Brain microvascular endothelial cell (primary cell): ENCODE measurements at regions of chr4 and their contacts with region 1.

Region 1: GRCh38 chr4:110005461-110006056 is 92.9 kb downstream of the EGF start:
- DNase-seq: peak; percentile 53
- H3K4me3 ChIP-seq: no peak overlapping the region
- H3K27ac ChIP-seq: no peak overlapping the region
- H3K27me3 ChIP-seq: no peaks in the 10 kb centered on the region
- CTCF ChIP-seq: peak; percentile 57

Region 2: DNA sequence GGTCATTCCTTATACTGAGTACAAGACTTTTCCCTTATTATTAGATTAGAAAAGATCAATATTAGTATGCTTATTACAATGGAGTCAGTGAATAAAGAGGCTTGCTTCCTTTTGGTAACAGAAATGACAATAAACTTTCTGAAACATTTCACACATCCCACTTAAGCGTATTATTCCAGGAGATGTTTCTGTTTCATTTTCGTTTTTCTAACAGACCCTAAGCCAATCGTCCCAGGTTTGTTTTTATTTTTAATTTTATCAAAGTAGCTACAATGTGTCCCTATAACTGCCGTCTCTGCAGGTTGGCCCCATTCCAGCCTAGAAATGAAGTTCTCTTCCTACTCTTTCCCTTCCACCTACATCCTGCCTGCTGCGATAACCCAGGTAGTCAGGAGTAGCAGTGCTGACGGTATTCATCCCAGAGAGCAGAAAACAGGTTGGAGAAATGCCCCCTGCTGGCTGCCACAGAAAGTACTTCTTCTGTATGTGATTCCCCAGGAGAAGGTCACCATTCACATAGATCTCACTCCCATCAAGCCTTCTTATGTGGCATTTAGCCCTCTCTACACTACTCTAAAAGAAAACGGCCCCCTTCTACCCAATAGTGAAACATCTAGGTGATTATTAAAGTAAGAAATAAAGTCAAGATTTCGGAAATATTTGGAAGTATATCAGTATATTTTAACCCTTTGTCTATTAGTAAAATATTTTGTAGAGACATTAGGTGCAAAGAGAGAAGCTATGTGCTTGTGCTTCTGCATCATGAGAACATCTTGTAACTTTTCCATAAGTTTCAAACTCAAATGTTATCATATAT is 510.8 kb after region 1 on chr4:
- in situ Hi-C with region 1: loop called (anchors 25 kb)
- DNase-seq: peak; percentile 63
- H3K4me3 ChIP-seq: peak overlapping the region; percentile 51
- H3K27ac ChIP-seq: no peak overlapping the region
- H3K27me3 ChIP-seq: no peaks in the 10 kb centered on the region
- CTCF ChIP-seq: peak; percentile 91